ENCODE measurements at regions of chr17 and their contacts with region 1.

Region 1: DNA sequence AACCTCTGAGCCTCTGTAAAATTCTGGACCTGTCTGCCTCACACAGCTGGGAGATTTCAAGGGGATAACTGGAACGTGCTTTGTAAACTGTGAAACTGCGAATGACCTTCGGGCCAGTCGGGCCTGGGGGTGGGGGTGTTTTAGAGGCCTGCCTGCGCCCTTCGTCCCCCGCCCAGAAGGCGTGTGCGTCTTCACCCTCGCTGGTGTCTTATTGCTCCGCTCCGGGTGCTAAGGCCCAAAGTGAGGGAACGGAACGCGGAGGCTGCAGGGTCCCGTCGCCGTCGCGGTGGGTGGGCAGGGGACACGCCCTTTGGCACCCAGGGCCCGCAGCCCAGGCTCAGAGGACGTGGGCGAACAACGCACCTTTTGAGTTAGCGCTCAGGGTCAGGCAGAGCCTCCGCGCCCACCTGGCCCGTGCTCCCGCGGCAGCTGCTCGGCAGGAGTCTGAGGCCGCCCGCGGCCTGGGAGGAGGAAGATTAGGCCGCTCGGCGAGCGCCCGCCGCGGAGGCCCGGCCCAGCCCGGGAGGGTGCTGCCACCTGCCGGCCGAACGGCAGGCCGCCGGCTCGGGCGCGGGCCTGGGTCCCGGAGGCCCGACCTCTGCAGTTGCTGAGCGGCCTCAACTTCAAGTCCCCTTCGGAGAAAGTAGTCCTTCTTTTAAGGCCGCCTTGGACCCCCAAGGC is 29.7 kb downstream of the DCAKD start:
- DNase-seq: peak in 1 of 2 experiments; percentile 85
- H3K4me3 ChIP-seq: peak overlapping the region; percentile 9 to 58 (median 40); a peak in 7 of 8 replicates
- H3K27ac ChIP-seq: no peak overlapping the region
- H3K4me1 ChIP-seq: peaks cover 9 to 23% (median 14%) of the 10 kb centered on the region in 4 experiments
- H3K27me3 ChIP-seq: peaks cover 20 to 43% (median 40%) of the 10 kb centered on the region in 4 experiments
- CTCF ChIP-seq: peak; percentile 82 to 94 (median 87)
- EP300 ChIP-seq: no peak; a peak in 1 of 3 replicates
- POLR2A ChIP-seq: peak in 1 of 2 experiments; percentile 26; a peak in 1 of 3 replicates
- RAD21 ChIP-seq: peak; percentile 74 to 92

Region 2: GRCh38 chr17:44844390-44844830 is 177.3 kb before region 1 on chr17:
- CTCF ChIA-PET with region 1: no interaction called
- POLR2A ChIA-PET with region 1: no interaction called
- DNase-seq: no peak
- H3K4me3 ChIP-seq: no peak overlapping the region
- H3K27ac ChIP-seq: no peak overlapping the region
- H3K4me1 ChIP-seq: peaks cover 6 to 22% (median 11%) of the 10 kb centered on the region in 4 experiments
- H3K27me3 ChIP-seq: no peaks in the 10 kb centered on the region
- CTCF ChIP-seq: peak in 1 of 3 experiments; percentile 14; a peak in 1 of 4 replicates
- EP300 ChIP-seq: no peak
- POLR2A ChIP-seq: no peak
- RAD21 ChIP-seq: peak in 1 of 2 experiments; percentile 25; a peak in 1 of 4 replicates

Region 3: DNA sequence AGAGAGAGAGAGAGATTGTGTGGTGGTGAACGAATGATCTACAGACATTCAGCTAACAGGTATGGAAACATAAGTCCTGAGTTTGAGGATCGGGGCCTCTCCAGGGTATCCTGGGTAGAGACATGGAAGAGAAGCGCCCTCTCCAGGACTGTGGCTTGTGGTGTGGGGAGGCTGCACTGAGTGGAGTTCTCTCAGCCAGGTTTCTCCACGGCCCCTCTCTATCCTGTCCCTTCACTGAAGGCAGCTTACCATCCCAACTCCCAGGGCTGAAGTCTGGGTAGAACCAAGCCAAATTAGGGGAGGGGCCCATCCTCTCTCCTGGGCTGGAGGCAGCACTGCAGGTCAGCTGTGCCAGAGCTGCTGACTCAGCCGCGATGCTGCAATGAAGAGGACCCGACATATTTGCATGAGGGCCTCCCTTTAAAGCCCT is 59.8 kb before region 1 on chr17:
- CTCF ChIA-PET with region 1: interaction called, 34 read pairs
- POLR2A ChIA-PET with region 1: interaction called, 3 read pairs
- DNase-seq: no peak
- H3K4me3 ChIP-seq: no peak overlapping the region
- H3K27ac ChIP-seq: no peak overlapping the region
- H3K4me1 ChIP-seq: peaks cover 0 to 14% (median 7%) of the 10 kb centered on the region in 4 experiments; a peak in 5 of 7 replicates
- H3K27me3 ChIP-seq: peaks cover 14 to 51% (median 41%) of the 10 kb centered on the region in 4 experiments; a peak in 6 of 7 replicates
- CTCF ChIP-seq: peak; percentile 47 to 57 (median 52)
- EP300 ChIP-seq: no peak
- POLR2A ChIP-seq: no peak
- RAD21 ChIP-seq: peak; percentile 44 to 58; a peak in 3 of 4 replicates

Region 4: GRCh38 chr17:44979426-44979995 is 42.2 kb before region 1 on chr17:
- CTCF ChIA-PET with region 1: interaction called, 35 read pairs
- POLR2A ChIA-PET with region 1: interaction called, 4 read pairs
- DNase-seq: no peak
- H3K4me3 ChIP-seq: no peak overlapping the region
- H3K27ac ChIP-seq: no peak overlapping the region
- H3K4me1 ChIP-seq: peaks cover 0 to 11% (median 6%) of the 10 kb centered on the region in 4 experiments; a peak in 5 of 7 replicates
- H3K27me3 ChIP-seq: no peaks in the 10 kb centered on the region; a peak in 1 of 7 replicates
- CTCF ChIP-seq: no peak
- EP300 ChIP-seq: no peak
- POLR2A ChIP-seq: no peak
- RAD21 ChIP-seq: no peak

Region 5: GRCh38 chr17:44997733-44998520 is 23.8 kb before region 1 on chr17:
- CTCF ChIA-PET with region 1: interaction called, 102 read pairs
- POLR2A ChIA-PET with region 1: no interaction called
- DNase-seq: no peak
- H3K4me3 ChIP-seq: no peak overlapping the region
- H3K27ac ChIP-seq: no peak overlapping the region
- H3K4me1 ChIP-seq: peaks cover 0 to 3% (median 0%) of the 10 kb centered on the region in 4 experiments; a peak in 1 of 7 replicates
- H3K27me3 ChIP-seq: peaks cover 0 to 4% (median under 1%) of the 10 kb centered on the region in 4 experiments; a peak in 2 of 7 replicates
- CTCF ChIP-seq: no peak
- EP300 ChIP-seq: no peak
- POLR2A ChIP-seq: no peak
- RAD21 ChIP-seq: no peak

Region 6: GRCh38 chr17:45051060-45051719 is 29.4 kb after region 1 on chr17 and contains the start of gene DCAKD:
- CTCF ChIA-PET with region 1: interaction called, 6 read pairs
- POLR2A ChIA-PET with region 1: interaction called, 12 read pairs
- DNase-seq: peak; percentile 79 to 89
- H3K4me3 ChIP-seq: peak within 1 kb of the TSS; percentile 75 to 84 (median 79)
- H3K27ac ChIP-seq: peak within 1 kb of the TSS; percentile 79
- H3K4me1 ChIP-seq: peaks cover 0 to 4% (median 2%) of the 10 kb centered on the region in 4 experiments; a peak in 3 of 7 replicates
- H3K27me3 ChIP-seq: no peaks in the 10 kb centered on the region; a peak in 1 of 7 replicates
- CTCF ChIP-seq: 0 out of 4 replicates have a peak, but pooled peaks of 1 of the 3 experiments have one; percentile 6
- EP300 ChIP-seq: no peak
- POLR2A ChIP-seq: peak in 1 of 2 experiments; percentile 67; a peak in 1 of 3 replicates
- RAD21 ChIP-seq: no peak; a peak in 1 of 4 replicates
- total RNA-seq, gene DCAKD: 33.7 and 35.6 TPM in 2 replicates

Measured in H1 (cell line).